ENCODE measurements at regions of chr5 and their contacts with region 1.

Region 1: DNA sequence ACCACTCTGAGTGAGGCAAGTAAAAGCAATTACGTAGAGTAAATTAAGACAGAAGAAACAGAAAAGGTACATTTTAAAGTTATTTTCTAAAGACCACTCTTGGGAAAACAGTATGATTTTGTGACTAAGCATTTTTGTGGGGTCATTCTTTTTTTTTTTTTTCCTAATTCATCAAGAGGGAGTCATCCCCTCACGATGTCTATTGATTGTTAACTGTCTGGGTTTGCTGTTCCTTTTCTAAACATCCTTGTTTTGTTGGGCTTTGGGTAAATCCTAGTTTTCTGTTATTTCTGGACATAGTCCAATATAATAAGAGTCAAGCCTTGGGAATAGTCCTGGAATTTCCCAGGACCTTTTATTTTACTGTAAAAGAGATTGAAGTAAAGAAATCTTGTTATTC is 63.8 kb downstream of the ANKRD55 start:
- DNase-seq: no peak
- H3K4me3 ChIP-seq: no peak overlapping the region
- H3K27ac ChIP-seq: no peak overlapping the region
- H3K4me1 ChIP-seq: peaks cover 8% of the 10 kb centered on the region
- H3K27me3 ChIP-seq: no peaks in the 10 kb centered on the region
- CTCF ChIP-seq: no peak

Region 2: GRCh38 chr5:56148453-56148971 is 20.8 kb before region 1 on chr5:
- CTCF ChIA-PET with region 1: interaction called, 11 read pairs
- POLR2A ChIA-PET with region 1: interaction called, 8 read pairs
- intact Hi-C with region 1: no loop called
- DNase-seq: no peak
- H3K4me3 ChIP-seq: no peak overlapping the region
- H3K27ac ChIP-seq: no peak overlapping the region
- H3K4me1 ChIP-seq: peaks cover 27% of the 10 kb centered on the region
- H3K27me3 ChIP-seq: no peaks in the 10 kb centered on the region
- CTCF ChIP-seq: no peak

Region 3: DNA sequence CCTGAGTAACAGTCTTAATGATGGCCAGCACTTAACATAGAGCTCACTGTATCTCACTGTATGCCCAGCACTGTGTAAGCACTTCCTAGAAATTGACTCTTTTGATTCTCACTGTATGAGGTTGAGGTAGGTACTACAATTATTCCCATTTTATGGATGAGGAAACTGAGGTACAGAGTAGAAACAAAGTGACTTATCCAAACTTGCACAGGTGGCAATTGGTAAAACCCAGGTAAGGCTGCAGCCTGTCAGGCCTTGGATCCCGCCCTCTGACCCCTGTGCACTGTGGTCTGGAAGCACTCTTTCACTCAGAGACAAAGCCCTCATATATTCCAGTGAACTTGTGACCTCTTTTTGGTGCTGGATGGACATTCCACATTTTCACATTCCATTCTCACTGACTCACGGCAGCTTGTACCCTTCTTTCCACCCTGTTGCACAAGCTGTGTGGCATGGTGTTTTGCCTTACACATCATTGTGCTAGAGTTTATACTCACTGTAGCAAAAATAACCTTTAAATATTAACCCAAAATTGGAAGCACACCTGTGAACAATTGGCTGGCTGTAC is 42.1 kb after region 1 on chr5:
- CTCF ChIA-PET with region 1: no interaction called
- POLR2A ChIA-PET with region 1: no interaction called
- intact Hi-C with region 1: no loop called
- DNase-seq: peak; percentile 70 to 94
- H3K4me3 ChIP-seq: no peak overlapping the region
- H3K27ac ChIP-seq: peak overlapping the region; percentile 87
- H3K4me1 ChIP-seq: peaks cover 26% of the 10 kb centered on the region
- H3K27me3 ChIP-seq: no peaks in the 10 kb centered on the region
- CTCF ChIP-seq: no peak

Measured in PC-9 (cell line).